ENCODE measurements at regions of chr5 and their contacts with region 1.

Region 1: DNA sequence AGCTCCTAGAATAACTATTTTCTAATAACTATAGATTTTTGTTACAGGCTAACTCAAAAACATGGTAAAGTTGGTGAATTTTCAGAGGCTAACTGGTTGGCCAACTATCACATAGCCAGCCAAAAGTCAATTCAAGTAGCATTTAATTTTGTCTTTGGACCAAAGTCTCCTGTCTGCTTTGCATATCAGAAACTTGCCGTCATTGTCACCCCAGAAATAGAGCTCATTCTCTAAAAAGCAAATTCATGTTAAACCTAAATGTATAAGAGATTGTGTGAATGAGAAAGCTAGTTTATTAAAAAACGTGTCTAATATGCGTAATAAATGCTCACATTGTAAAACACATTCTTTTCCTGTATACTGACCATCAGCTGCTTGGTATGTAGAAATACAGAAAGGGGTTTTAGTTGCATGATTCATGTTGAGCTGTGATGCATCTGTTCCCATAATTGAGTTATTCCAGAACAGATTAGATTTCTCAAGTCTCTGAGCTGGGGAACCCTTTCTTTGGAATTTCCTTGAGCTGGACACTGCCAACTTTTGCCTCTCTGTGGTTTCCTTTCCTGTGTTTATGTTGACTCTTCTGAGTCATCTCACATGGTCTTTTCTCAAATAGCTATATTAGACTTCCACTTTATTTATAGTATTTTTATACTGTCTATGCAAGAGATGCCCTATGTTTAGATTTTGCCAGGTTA is 7.3 kb downstream of the SRFBP1 start:
- DNase-seq: peak; percentile 92
- ATAC-seq: peak; percentile 93
- H3K4me3 ChIP-seq: peak overlapping the region; percentile 25; the same call in 1 of the 2 replicates
- H3K27ac ChIP-seq: peak overlapping the region; percentile 80
- H3K4me1 ChIP-seq: peaks cover 39% of the 10 kb centered on the region
- H3K27me3 ChIP-seq: no peaks in the 10 kb centered on the region
- CTCF ChIP-seq: no peak

Region 2: GRCh38 chr5:121982146-121982892 is 13.3 kb after region 1 on chr5:
- CTCF ChIA-PET with region 1: no interaction called
- POLR2A ChIA-PET with region 1: no interaction called
- intact Hi-C with region 1: no loop called
- DNase-seq: peak; percentile 60
- ATAC-seq: peak; percentile 88
- H3K4me3 ChIP-seq: no peak overlapping the region
- H3K27ac ChIP-seq: 0 out of 2 replicates have a peak overlapping the region, but pooled peaks have one; percentile 8
- H3K4me1 ChIP-seq: peaks cover 17% of the 10 kb centered on the region
- H3K27me3 ChIP-seq: no peaks in the 10 kb centered on the region
- CTCF ChIP-seq: no peak

Region 3: GRCh38 chr5:122030251-122030650 is 61.2 kb after region 1 on chr5:
- CTCF ChIA-PET with region 1: no interaction called
- POLR2A ChIA-PET with region 1: no interaction called
- intact Hi-C with region 1: loop called (anchors 5 kb)
- DNase-seq: no peak
- ATAC-seq: no peak
- H3K4me3 ChIP-seq: no peak overlapping the region
- H3K27ac ChIP-seq: no peak overlapping the region
- H3K4me1 ChIP-seq: no peaks in the 10 kb centered on the region
- H3K27me3 ChIP-seq: no peaks in the 10 kb centered on the region
- CTCF ChIP-seq: no peak

Region 4: GRCh38 chr5:122076664-122077365 is 107.8 kb after region 1 on chr5:
- CTCF ChIA-PET with region 1: interaction called, 15 read pairs
- POLR2A ChIA-PET with region 1: no interaction called
- intact Hi-C with region 1: loop called (anchors 1 kb)
- DNase-seq: peak; percentile 62
- ATAC-seq: peak; percentile 61
- H3K4me3 ChIP-seq: peak overlapping the region; percentile 76
- H3K27ac ChIP-seq: no peak overlapping the region
- H3K4me1 ChIP-seq: peaks cover 10% of the 10 kb centered on the region; the same call in 1 of the 2 replicates
- H3K27me3 ChIP-seq: no peaks in the 10 kb centered on the region
- CTCF ChIP-seq: peak; percentile 72

Region 5: DNA sequence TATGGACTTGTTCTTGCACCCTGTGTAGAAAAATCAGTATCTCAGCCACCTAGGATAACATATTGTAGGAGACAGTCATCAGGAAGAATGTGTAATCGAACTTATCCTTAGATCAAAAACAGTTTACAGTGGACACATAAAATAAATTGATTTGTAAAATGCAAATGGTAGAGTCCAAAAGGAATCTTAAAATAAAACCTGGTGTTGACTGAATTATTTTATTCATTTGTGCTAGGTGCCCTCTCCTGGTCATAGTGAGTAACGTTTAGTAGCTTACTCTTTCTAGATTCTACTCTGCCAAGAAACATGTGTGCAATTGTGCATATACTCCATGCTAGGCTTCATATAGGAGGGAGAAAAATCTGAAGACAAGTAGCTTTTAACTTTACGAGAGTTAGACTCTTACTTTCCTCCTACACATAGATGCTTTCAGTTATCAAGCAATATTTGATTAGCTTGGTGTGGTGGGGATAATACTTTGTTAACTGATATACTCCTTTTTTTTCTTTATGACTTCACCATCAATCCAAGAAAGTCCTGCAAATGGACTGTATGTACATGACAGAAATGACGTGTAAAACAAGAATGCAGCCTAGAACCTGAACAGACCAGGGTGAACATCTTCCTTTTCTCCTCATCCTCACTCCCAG is 132.7 kb after region 1 on chr5:
- CTCF ChIA-PET with region 1: interaction called, 10 read pairs
- POLR2A ChIA-PET with region 1: no interaction called
- intact Hi-C with region 1: loop called (anchors 1 kb)
- DNase-seq: peak; percentile 53
- ATAC-seq: peak; percentile 49; the same call in 1 of the 2 replicates
- H3K4me3 ChIP-seq: no peak overlapping the region
- H3K27ac ChIP-seq: no peak overlapping the region
- H3K4me1 ChIP-seq: peaks cover 8% of the 10 kb centered on the region
- H3K27me3 ChIP-seq: no peaks in the 10 kb centered on the region
- CTCF ChIP-seq: peak; percentile 66; the same call in 1 of the 2 replicates

Region 6: GRCh38 chr5:122156724-122157325 is 187.8 kb after region 1 on chr5:
- CTCF ChIA-PET with region 1: interaction called, 5 read pairs
- POLR2A ChIA-PET with region 1: no interaction called
- intact Hi-C with region 1: loop called (anchors 1 kb)
- DNase-seq: peak; percentile 51
- ATAC-seq: peak; percentile 51; the same call in 1 of the 2 replicates
- H3K4me3 ChIP-seq: no peak overlapping the region
- H3K27ac ChIP-seq: no peak overlapping the region
- H3K4me1 ChIP-seq: peaks cover 14% of the 10 kb centered on the region
- H3K27me3 ChIP-seq: no peaks in the 10 kb centered on the region
- CTCF ChIP-seq: peak; percentile 58